ENCODE measurements at regions of chr7 and their contacts with region 1.

Region 1: DNA sequence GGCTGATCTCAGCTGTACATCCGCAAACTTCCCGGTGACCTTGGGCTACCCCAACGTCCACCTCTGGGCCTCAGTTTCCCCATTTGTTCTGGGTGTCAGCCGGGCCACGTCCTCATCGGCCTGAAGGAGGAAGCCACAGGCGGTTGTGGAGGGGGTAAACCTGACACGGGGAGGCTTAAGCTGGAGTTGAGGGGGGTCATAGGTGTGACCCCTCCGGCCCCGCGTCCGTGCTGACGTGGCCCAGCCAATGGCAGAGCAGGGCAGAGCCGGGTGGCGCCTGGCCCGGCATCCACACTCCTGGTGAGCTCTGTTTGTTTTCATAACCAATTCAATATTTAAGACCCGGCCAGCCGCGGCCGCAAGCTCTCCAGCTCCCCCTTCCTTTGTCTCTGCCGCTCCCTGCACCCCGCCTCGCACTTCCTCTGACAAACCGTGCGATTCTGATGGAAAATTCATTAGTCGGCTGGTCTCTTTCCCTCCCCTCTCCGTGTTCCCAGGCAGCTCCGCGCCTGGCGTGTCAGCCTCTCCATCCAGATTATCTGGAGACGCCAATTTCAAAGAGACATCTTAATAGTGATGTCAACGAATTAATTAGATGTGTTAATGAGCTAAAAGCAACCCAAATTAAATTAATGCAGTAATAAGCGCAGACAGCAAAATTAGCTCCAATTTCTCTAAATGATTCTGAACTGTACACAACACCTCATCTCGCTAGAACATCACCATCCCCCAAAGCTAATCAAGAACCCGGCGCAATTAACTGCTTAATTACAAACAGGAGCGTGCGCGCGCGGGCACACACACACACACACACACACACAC is 55.4 kb downstream of the MICALL2 start:
- DNase-seq: no peak
- ATAC-seq: peak; percentile 41
- H3K4me3 ChIP-seq: no peak overlapping the region
- H3K27ac ChIP-seq: no peak overlapping the region
- H3K4me1 ChIP-seq: peaks cover 5 to 20% of the 10 kb centered on the region in 2 experiments
- H3K27me3 ChIP-seq: no peaks in the 10 kb centered on the region
- CTCF ChIP-seq: no peak
- POLR2A ChIP-seq: no peak
- RAD21 ChIP-seq: no peak

Region 2: GRCh38 chr7:1368682-1369571 is 34.9 kb before region 1 on chr7:
- CTCF ChIA-PET with region 1: no interaction called
- POLR2A ChIA-PET with region 1: interaction called, 3 read pairs
- RAD21 ChIA-PET with region 1: no interaction called
- intact Hi-C with region 1: loop called (anchors 5 kb)
- DNase-seq: peak; percentile 27
- ATAC-seq: peak; percentile 89
- H3K4me3 ChIP-seq: peak overlapping the region; percentile 9 to 44; a peak in 2 of 4 replicates
- H3K27ac ChIP-seq: no peak overlapping the region; the same call in 1 of the 2 replicates
- H3K4me1 ChIP-seq: peaks cover 0 to 20% of the 10 kb centered on the region in 2 experiments; a peak in 2 of 4 replicates
- H3K27me3 ChIP-seq: no peaks in the 10 kb centered on the region
- CTCF ChIP-seq: peak in 1 of 3 experiments; percentile 31; a peak in 2 of 6 replicates
- POLR2A ChIP-seq: no peak
- RAD21 ChIP-seq: peak; percentile 34

Measured in HCT116 (cell line).